ENCODE measurements at regions of chr5 and their contacts with region 1.

Region 1: GRCh38 chr5:150544611-150545219 is 36.8 kb downstream of the NDST1 start:
- DNase-seq: peak; percentile 89
- ATAC-seq: peak; percentile 87
- H3K4me3 ChIP-seq: no peak overlapping the region
- H3K27ac ChIP-seq: no peak overlapping the region
- H3K4me1 ChIP-seq: peaks cover 36% of the 10 kb centered on the region
- H3K27me3 ChIP-seq: no peaks in the 10 kb centered on the region
- CTCF ChIP-seq: peak; percentile 88

Region 2: DNA sequence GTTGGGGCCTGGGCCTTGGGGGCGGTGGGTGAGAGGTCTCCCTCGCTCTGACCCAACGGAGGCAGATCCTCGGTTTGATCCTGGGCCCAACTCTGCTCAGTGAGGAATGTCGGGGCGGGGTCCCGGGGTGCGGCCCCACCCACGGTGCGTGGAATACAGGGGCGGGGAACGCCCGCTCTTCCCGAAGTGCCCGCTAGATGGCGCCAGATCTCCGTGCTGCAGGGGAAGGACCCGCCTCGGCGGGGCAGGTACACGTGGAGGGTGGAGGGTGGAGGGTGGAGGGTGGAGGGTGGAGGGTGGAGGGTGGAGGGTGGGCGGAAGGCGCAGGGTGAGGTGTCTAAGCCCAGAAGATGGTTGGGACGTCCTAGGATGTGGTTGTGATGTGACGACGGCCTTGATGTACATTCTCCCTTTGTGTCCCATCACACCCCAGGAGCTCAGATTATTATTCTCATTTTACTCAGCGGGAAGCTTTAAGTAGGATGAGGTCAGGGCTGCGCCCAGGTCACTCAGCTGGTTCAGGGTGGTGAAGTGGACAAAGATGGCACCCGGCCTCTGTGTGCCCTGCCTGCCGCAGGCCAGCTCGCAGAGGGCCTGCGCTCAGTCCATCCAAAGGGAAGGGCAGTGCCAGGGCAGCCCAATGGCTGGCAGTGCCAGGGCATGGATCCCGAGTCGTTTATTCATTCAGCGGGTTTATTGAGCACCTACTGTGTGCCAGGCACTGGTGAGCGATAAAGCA is 85.7 kb before region 1 on chr5:
- intact Hi-C with region 1: loop called (anchors 5 kb)
- DNase-seq: peak; percentile 92
- ATAC-seq: peak; percentile 97
- H3K4me3 ChIP-seq: peak overlapping the region; percentile 28
- H3K27ac ChIP-seq: peak overlapping the region; percentile 47
- H3K4me1 ChIP-seq: no peaks in the 10 kb centered on the region
- H3K27me3 ChIP-seq: no peaks in the 10 kb centered on the region
- CTCF ChIP-seq: peak; percentile 81

Measured in upper lobe of right lung (tissue), 1 donor.